Breast epithelium (tissue), 4 donors: ENCODE measurements at regions of chr2 and their contacts with region 1.

Region 1: GRCh38 chr2:66574701-66575624 is 140.0 kb downstream of the MEIS1 start:
- DNase-seq: no peak
- H3K4me3 ChIP-seq: peak overlapping the region; percentile 55 to 72 (median 59)
- H3K27ac ChIP-seq: peak overlapping the region; percentile 68 to 69
- H3K4me1 ChIP-seq: peaks cover 0 to 10% of the 10 kb centered on the region in 2 donors
- H3K27me3 ChIP-seq: peaks cover 0 to 45% of the 10 kb centered on the region in 2 donors
- CTCF ChIP-seq: peak in 2 of 3 donors; percentile 14 to 35
- POLR2A ChIP-seq: no peak

Region 2: GRCh38 chr2:66434679-66435548 is 140.0 kb before region 1 on chr2 and contains the start of gene MEIS1:
- intact Hi-C with region 1: loop called (anchors 10 kb)
- DNase-seq: peak; percentile 89 to 90
- H3K4me3 ChIP-seq: peak within 1 kb of the TSS; percentile 69 to 77 (median 76)
- H3K27ac ChIP-seq: peak within 1 kb of the TSS; percentile 83 to 89
- H3K4me1 ChIP-seq: no peaks in the 10 kb centered on the region
- H3K27me3 ChIP-seq: no peaks in the 10 kb centered on the region
- CTCF ChIP-seq: no peak
- POLR2A ChIP-seq: peak; percentile 78
- total RNA-seq, gene MEIS1: 23.0 to 37.9 (median 37.0) TPM

Region 3: DNA sequence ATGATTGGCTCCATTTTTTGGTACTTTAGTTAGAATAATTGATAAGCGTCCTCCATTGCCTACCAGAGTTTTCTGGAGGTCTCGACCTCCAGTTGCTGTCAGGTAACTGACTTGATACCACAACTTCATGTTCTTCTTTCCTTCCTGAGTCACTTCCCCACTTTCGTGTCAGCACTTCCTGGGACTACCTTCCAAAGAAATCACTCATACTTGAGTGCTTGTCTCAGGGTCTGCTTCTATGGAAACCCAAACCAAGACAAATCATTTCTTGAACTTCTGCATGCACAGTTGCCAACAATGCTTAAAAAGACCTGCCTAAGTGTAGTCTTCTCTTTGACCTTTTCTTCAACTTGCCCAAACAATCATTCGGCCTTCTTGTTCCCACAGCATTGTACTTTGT is 611.9 kb after region 1 on chr2:
- intact Hi-C with region 1: no loop called
- DNase-seq: no peak
- H3K4me3 ChIP-seq: no peak overlapping the region
- H3K27ac ChIP-seq: no peak overlapping the region
- H3K4me1 ChIP-seq: no peaks in the 10 kb centered on the region
- H3K27me3 ChIP-seq: no peaks in the 10 kb centered on the region
- CTCF ChIP-seq: no peak
- POLR2A ChIP-seq: no peak